ENCODE measurements at regions of chr15 and their contacts with region 1.

Region 1: DNA sequence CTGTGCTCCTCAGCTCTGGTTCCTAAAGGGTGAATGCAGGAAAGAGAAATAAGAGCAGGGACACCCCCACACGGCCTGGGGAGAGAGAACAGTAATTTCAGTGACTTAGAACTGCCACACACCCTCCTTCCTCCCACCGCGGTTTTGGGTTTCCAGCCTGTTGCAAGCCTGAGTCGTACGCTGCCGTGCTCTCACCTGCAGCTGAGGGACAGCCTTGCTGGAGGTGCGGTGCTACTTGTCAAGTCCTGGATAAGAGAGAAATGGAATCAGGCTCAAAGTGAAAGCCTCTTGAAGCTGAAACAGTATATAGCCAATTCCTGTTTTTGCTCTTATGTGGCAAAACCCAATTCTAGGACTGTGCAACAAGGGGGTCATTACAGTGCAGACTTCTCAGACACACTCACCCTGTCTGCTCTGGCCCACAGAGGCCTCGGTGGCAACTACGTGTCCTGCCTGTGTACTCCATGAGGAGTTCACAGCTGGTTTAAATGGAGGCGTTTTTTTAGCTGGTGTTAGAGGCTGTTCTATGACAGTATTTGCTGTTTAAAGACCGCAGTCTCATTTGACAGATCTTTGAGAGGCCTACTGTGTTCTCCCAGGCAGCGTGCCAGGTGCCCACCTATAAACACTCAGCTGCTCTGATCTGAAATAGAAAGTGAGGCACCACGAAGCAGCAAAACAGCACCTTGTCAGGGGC is 42.9 kb downstream of the TBC1D2B start:
- DNase-seq: peak; percentile 95
- ATAC-seq: peak; percentile 88
- H3K4me3 Mint-ChIP-seq: peak overlapping the region; percentile 50
- H3K27ac Mint-ChIP-seq: peak overlapping the region; percentile 86
- H3K4me1 Mint-ChIP-seq: peaks cover 89% of the 10 kb centered on the region
- H3K27me3 Mint-ChIP-seq: no peaks in the 10 kb centered on the region

Region 2: GRCh38 chr15:77002954-77003912 is 1031.4 kb before region 1 on chr15:
- CTCF ChIA-PET with region 1: no interaction called
- POLR2A ChIA-PET with region 1: no interaction called
- intact Hi-C with region 1: loop called in 1 of 2 experiments (anchors 10 kb)
- DNase-seq: peak; percentile 88
- ATAC-seq: peak; percentile 86
- H3K4me3 Mint-ChIP-seq: peak overlapping the region; percentile 67
- H3K27ac Mint-ChIP-seq: peak overlapping the region; percentile 94
- H3K4me1 Mint-ChIP-seq: peaks cover 84% of the 10 kb centered on the region
- H3K27me3 Mint-ChIP-seq: no peaks in the 10 kb centered on the region

Region 3: DNA sequence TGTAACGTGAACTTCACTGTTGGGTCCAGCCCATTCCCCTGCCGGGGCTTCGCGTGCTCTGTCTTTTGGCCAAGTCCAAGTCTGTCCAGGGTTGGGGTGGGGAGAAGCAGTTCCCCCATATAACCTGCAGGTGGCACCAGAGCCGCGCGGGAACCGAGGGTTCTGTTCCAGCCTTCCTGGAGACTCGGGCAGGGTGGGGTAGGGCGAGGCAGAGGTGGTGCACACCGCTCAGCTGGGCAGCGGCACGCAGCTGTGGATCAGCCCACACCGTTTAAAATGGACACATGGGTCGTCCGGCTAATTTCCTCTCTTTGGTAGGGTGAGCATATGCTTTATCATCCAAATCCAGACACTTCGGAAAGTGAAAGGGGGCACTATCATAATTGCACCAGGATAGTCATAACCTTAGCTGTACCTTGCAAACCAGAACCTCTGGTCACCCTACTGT is 75.2 kb before region 1 on chr15:
- CTCF ChIA-PET with region 1: interaction called, 3 read pairs
- POLR2A ChIA-PET with region 1: no interaction called
- intact Hi-C with region 1: loop called in 1 of 2 experiments (anchors 10 kb)
- DNase-seq: peak; percentile 87
- ATAC-seq: peak; percentile 98
- H3K4me3 Mint-ChIP-seq: no peak overlapping the region
- H3K27ac Mint-ChIP-seq: no peak overlapping the region
- H3K4me1 Mint-ChIP-seq: peaks cover 5% of the 10 kb centered on the region
- H3K27me3 Mint-ChIP-seq: peaks cover 6% of the 10 kb centered on the region

Region 4: DNA sequence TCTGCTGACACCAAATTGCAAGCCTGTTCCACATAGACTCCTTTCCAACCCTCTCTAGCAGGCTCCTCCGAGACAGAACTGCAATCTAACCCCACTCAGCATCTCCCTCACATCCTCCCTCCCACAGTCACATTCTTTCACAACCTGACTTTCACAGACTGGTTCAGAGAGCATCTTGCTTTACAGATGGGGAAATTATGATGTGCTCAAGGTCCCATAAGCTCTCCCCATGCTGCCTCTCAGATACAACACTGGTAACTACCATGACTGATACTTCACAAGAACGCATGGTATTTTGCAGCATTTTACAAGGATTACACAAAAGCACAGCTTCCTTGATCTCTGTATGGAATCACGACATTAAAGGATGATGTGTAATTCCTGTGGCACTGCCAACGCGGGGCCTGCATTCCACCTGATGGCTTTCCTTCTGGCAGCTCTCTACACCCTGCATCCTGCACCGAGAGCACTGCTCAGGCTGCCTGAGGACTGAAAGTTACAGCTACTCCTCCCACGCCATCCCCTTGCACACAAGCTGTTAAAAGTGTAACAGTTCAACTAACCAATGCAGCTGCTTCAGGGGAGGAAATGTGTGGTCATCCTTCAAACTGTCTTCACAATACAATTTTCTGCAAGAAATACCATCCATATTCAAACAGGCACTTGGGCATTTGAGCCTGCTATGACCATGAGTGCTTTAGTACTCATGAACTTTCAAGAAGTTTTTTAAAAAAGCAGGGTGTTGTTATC is 15.2 kb after region 1 on chr15:
- CTCF ChIA-PET with region 1: interaction called, 51 read pairs
- POLR2A ChIA-PET with region 1: interaction called, 13 read pairs
- intact Hi-C with region 1: loop called (anchors 1 kb)
- DNase-seq: peak; percentile 86
- ATAC-seq: peak; percentile 63
- H3K4me3 Mint-ChIP-seq: peak overlapping the region; percentile 54
- H3K27ac Mint-ChIP-seq: peak overlapping the region; percentile 90
- H3K4me1 Mint-ChIP-seq: peaks cover 97% of the 10 kb centered on the region
- H3K27me3 Mint-ChIP-seq: no peaks in the 10 kb centered on the region

Region 5: DNA sequence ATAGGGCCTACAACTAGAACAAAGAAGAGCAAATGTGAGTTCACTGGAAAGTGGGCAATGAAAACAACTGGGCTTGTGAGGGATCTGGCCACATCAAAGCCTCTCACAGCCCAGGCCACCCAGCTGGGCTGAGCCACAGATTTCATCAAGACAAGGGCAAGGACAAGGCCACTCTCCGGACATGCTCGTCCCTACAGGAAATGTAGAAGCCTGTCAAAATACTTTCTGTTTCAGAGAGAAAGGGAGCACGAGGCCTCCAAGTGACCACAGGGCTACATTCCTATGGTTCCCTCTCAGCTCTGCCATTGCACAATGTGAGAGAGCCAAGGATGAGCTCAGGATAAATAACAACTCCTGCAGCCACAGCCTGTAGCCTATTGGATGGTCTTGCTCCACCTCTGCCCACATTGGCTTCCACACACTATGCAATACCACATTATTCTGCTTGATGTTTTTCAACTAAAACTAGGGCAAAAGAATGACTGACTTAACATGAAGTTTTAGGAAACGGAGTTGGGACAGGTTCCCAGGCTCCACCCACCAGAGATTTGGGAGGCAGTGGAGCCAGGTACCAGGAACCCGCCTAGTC is 30.7 kb after region 1 on chr15:
- CTCF ChIA-PET with region 1: interaction called, 35 read pairs
- POLR2A ChIA-PET with region 1: interaction called, 5 read pairs
- intact Hi-C with region 1: loop called in 1 of 2 experiments (anchors 1 kb)
- DNase-seq: peak; percentile 16
- ATAC-seq: no peak
- H3K4me3 Mint-ChIP-seq: no peak overlapping the region
- H3K27ac Mint-ChIP-seq: no peak overlapping the region
- H3K4me1 Mint-ChIP-seq: peaks cover 14% of the 10 kb centered on the region
- H3K27me3 Mint-ChIP-seq: no peaks in the 10 kb centered on the region

Region 6: DNA sequence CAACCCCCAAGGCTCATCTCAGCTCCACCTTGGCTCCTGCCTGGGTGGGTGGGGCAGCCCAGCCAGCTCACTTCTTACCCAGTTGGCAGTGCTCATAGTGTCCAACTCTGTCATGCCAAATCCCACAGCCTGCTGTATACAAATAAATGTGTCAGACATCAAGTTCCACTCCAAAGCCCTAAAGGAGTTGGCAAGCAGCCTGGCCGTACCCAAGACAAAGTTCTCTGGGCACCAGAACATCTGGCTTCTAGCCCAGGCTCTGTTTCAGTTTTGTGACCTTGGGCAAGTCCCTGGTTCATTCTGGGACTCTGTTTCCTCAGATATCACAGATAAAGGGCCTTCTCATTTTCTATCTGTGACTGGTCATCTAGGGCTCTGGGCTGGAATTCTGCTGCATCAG is 182.1 kb after region 1 on chr15:
- CTCF ChIA-PET with region 1: no interaction called
- POLR2A ChIA-PET with region 1: no interaction called
- intact Hi-C with region 1: no loop called
- DNase-seq: no peak
- ATAC-seq: no peak
- H3K4me3 Mint-ChIP-seq: no peak overlapping the region
- H3K27ac Mint-ChIP-seq: no peak overlapping the region
- H3K4me1 Mint-ChIP-seq: no peaks in the 10 kb centered on the region
- H3K27me3 Mint-ChIP-seq: peaks cover 2% of the 10 kb centered on the region

Measured in activated CD4-positive, alpha-beta T cell treated with anti-CD3 and anti-CD28 coated beads for 36 hours (primary cell).